ENCODE measurements at regions of chr3 and their contacts with region 1.

Region 1: GRCh38 chr3:189324538-189325138 is 152.9 kb downstream of the TPRG1 start:
- DNase-seq: peak; percentile 95
- H3K4me3 Mint-ChIP-seq: peak overlapping the region; percentile 66
- H3K27ac Mint-ChIP-seq: peak overlapping the region; percentile 98
- H3K4me1 Mint-ChIP-seq: peaks cover 74% of the 10 kb centered on the region
- H3K27me3 Mint-ChIP-seq: no peaks in the 10 kb centered on the region

Region 2: DNA sequence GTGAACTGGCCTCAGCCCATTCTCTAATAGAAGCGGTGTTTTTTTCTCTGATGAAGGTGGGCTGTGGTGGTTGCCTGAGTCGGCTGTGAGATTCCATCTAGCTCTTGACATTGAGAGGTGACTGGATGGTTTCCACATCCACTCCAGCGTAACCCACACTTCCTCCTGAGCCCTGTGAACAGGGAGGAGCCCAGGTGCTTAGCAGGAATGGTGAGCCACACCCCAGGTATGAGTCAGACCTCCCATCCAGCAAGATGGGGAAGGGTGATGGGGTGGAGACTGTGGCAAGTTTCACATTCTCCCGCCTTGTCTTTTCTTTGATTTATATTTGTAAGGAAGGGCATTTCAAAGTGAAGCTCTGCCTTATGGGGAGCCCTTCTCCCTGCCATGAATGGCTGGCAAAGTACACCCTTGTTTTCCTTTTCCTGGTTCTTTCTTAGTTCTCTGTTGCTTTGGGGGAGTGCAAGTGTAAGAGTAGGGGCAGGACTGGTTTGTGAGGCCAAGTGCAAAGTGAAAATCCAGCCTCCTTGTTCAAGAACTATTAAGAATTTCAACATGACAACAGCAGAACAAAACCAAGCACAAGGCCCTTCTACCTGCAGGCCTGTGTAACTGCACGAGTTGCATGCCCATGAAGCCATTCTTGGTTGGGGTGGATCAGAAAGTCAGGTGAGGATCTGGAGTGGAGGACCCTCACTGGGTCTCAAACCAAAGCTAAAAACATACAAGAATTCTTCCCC is 157.4 kb before region 1 on chr3:
- CTCF ChIA-PET with region 1: no interaction called
- POLR2A ChIA-PET with region 1: no interaction called
- DNase-seq: no peak
- H3K4me3 Mint-ChIP-seq: no peak overlapping the region
- H3K27ac Mint-ChIP-seq: no peak overlapping the region
- H3K4me1 Mint-ChIP-seq: peaks cover 12% of the 10 kb centered on the region
- H3K27me3 Mint-ChIP-seq: no peaks in the 10 kb centered on the region

Region 3: GRCh38 chr3:189288348-189289235 is 36.0 kb before region 1 on chr3:
- CTCF ChIA-PET with region 1: no interaction called
- POLR2A ChIA-PET with region 1: no interaction called
- DNase-seq: no peak
- H3K4me3 Mint-ChIP-seq: no peak overlapping the region
- H3K27ac Mint-ChIP-seq: no peak overlapping the region
- H3K4me1 Mint-ChIP-seq: peaks cover 32% of the 10 kb centered on the region
- H3K27me3 Mint-ChIP-seq: no peaks in the 10 kb centered on the region

Region 4: GRCh38 chr3:189307963-189308362 is 16.7 kb before region 1 on chr3:
- CTCF ChIA-PET with region 1: interaction called, 21 read pairs
- POLR2A ChIA-PET with region 1: interaction called, 6 read pairs
- DNase-seq: no peak
- H3K4me3 Mint-ChIP-seq: peak overlapping the region; percentile 58
- H3K27ac Mint-ChIP-seq: peak overlapping the region; percentile 81
- H3K4me1 Mint-ChIP-seq: peaks cover 60% of the 10 kb centered on the region
- H3K27me3 Mint-ChIP-seq: peaks cover 2% of the 10 kb centered on the region